ENCODE measurements at regions of chr1 and their contacts with region 1.

Region 1: GRCh38 chr1:27102707-27103491 is 52.0 kb downstream of the SLC9A1 start:
- DNase-seq: no peak
- ATAC-seq: peak; percentile 73
- H3K4me3 ChIP-seq: no peak overlapping the region
- H3K27ac ChIP-seq: no peak overlapping the region
- H3K4me1 ChIP-seq: peaks cover 24% of the 10 kb centered on the region
- H3K27me3 ChIP-seq: no peaks in the 10 kb centered on the region
- CTCF ChIP-seq: peak; percentile 95 to 98 (median 97)
- EP300 ChIP-seq: no peak
- POLR2A ChIP-seq: no peak
- RAD21 ChIP-seq: peak; percentile 95

Region 2: DNA sequence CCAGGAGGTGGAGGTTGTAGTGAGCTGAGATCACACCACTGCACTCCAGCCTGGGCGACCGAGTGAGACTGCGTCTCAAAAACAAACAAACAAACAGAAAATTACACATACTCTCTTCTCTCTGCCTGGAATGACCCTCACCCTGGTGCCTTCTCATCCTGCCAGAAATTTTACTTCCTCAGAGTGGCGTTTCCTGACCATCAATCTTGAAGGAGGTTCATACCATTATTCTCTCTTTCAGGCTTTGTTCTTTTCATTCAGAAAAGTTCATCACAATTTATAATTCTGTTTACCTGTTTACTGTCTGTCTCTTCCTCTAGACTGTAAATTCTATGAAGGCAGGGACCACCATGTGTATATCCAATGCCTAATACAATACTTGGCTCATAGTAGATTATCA is 494.0 kb before region 1 on chr1:
- CTCF ChIA-PET with region 1: no interaction called
- POLR2A ChIA-PET with region 1: no interaction called
- RAD21 ChIA-PET with region 1: no interaction called
- SMC1A ChIA-PET with region 1: no interaction called
- in situ Hi-C with region 1: no loop called
- intact Hi-C with region 1: no loop called
- DNase-seq: no peak
- ATAC-seq: no peak
- H3K4me3 ChIP-seq: no peak overlapping the region
- H3K27ac ChIP-seq: no peak overlapping the region
- H3K4me1 ChIP-seq: no peaks in the 10 kb centered on the region
- H3K27me3 ChIP-seq: no peaks in the 10 kb centered on the region
- CTCF ChIP-seq: peak in 1 of 3 experiments; percentile 35; a peak in 2 of 6 replicates
- EP300 ChIP-seq: no peak
- POLR2A ChIP-seq: no peak
- RAD21 ChIP-seq: peak; percentile 49

Region 3: DNA sequence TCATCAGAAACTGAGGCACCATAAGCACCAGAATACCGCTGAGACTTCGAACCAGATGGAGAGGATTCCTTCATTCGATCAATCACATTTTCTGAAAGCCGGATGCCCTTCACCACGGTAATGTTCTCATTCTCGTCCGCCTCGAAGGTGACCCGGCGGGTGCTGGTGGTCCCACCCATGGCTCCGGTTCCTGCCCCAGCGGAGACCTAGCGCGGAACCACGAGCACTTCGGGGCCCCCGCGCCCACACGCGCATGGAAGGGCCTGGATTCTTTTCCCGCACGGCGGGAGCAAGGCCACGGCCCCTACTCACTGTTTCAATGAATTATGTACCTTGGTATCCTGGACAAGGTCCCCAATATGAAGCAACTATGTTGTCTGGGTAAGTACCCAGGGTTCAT is 98.4 kb after region 1 on chr1:
- CTCF ChIA-PET with region 1: interaction called, 24 read pairs
- POLR2A ChIA-PET with region 1: no interaction called
- RAD21 ChIA-PET with region 1: interaction called, 15 read pairs
- SMC1A ChIA-PET with region 1: interaction called, 7 read pairs
- in situ Hi-C with region 1: loop called (anchors 5 kb)
- intact Hi-C with region 1: loop called (anchors 1 kb)
- DNase-seq: no peak
- ATAC-seq: no peak
- H3K4me3 ChIP-seq: no peak overlapping the region
- H3K27ac ChIP-seq: no peak overlapping the region
- H3K4me1 ChIP-seq: no peaks in the 10 kb centered on the region
- H3K27me3 ChIP-seq: no peaks in the 10 kb centered on the region
- CTCF ChIP-seq: no peak
- EP300 ChIP-seq: no peak
- POLR2A ChIP-seq: no peak
- RAD21 ChIP-seq: no peak